Activated B cell treated with CpG ODN at 0.5 μM for 24 hours (primary cell): ENCODE measurements at regions of chr7 and their contacts with region 1.

Region 1: GRCh38 chr7:139431010-139431409 is 52.5 kb downstream of the KLRG2 start:
- DNase-seq: no peak
- ATAC-seq: no peak
- H3K4me3 Mint-ChIP-seq: no peak overlapping the region
- H3K27ac Mint-ChIP-seq: no peak overlapping the region
- H3K4me1 Mint-ChIP-seq: peaks cover 8% of the 10 kb centered on the region
- H3K27me3 Mint-ChIP-seq: no peaks in the 10 kb centered on the region
- CTCF ChIP-seq: no peak

Region 2: DNA sequence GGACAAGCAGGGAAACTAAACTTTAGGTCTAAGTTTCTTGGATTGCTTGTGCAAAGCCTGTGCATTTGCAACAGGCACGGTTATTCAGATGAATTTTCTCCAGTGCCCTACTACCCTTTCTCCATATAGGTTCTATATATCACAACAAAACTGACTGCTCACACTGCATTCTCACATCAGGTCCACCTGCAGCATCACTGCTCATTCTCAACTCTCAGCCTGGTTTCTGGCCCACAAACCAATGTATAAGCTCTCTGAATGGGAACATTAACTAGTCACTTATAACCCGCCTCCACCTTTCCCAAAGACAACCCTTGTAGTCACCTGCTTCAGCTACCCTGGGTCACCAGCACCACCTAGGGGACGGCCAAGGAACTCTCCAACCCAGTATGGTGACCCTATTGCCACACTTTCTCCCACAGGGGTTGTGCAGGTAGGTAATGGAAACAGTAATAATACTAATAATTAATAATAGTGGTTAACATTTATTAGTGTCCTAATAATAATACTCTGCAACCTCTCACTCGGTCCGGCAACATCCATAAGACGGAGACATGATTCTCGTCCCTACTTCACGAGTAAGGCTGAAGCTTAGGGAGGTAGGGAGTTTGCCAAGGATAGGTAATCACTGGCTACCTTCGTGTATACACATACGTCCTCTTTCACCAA is 189.8 kb after region 1 on chr7:
- CTCF ChIA-PET with region 1: no interaction called
- POLR2A ChIA-PET with region 1: no interaction called
- intact Hi-C with region 1: loop called (anchors 10 kb)
- DNase-seq: no peak
- ATAC-seq: peak; percentile 49
- H3K4me3 Mint-ChIP-seq: no peak overlapping the region
- H3K27ac Mint-ChIP-seq: no peak overlapping the region
- H3K4me1 Mint-ChIP-seq: no peaks in the 10 kb centered on the region
- H3K27me3 Mint-ChIP-seq: no peaks in the 10 kb centered on the region
- CTCF ChIP-seq: no peak